ENCODE measurements at regions of chr5 and their contacts with region 1.

Region 1: DNA sequence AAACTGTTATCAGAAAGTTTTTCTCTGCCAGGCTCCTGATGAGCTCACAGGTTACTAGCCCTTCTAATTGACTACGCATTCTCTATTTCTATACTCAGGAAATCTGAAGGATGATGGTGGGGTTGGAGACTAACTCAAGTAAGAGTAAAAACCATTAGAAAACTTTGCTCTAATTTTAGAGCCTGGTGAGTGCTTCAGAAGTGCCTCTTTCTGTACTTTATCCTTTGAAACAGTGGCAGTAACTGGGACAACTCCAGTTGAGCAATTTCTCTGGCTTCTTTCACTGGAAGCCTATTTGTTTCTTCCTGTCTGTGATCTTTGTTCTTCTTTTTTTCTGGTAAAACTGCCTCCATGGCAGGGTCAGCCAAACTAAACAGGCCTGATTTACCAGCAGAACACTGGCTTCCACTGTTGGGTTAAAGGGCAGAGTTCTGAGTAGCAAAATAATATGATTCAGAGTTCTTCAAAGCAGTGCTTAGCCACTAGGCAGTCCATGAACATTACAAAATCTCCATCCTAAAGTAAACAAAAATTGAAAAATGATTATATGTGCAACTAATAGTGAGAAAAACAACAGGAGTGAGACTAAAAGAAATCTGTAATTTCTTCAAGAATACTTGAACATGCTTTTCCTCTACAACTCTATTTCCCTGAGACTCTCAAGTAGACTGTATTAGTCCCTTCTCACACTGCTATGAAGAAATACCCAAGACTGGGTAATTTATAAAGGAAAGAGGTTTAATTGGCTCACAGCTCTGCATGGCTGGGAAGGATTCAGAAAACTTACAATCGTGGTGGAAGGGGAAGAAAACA is 79.8 kb downstream of the MROH2B start:
- DNase-seq: peak; percentile 94
- ATAC-seq: peak; percentile 98
- H3K4me3 ChIP-seq: peak overlapping the region in 2 of 3 experiments; percentile 9 to 24; a peak in 1 of 6 replicates
- H3K27ac ChIP-seq: peak overlapping the region; percentile 91
- H3K4me1 ChIP-seq: peaks cover 51% of the 10 kb centered on the region
- H3K27me3 ChIP-seq: no peaks in the 10 kb centered on the region
- CTCF ChIP-seq: no peak
- EP300 ChIP-seq: peak in 1 of 2 experiments; percentile 95; a peak in 2 of 4 replicates
- POLR2A ChIP-seq: no peak
- RAD21 ChIP-seq: no peak

Region 2: GRCh38 chr5:41009232-41009631 is 17.9 kb after region 1 on chr5:
- CTCF ChIA-PET with region 1: no interaction called
- POLR2A ChIA-PET with region 1: no interaction called
- in situ Hi-C with region 1: no loop called
- intact Hi-C with region 1: no loop called
- DNase-seq: peak; percentile 13
- ATAC-seq: no peak
- H3K4me3 ChIP-seq: no peak overlapping the region
- H3K27ac ChIP-seq: no peak overlapping the region
- H3K4me1 ChIP-seq: no peaks in the 10 kb centered on the region
- H3K27me3 ChIP-seq: no peaks in the 10 kb centered on the region; a peak in 1 of 5 replicates
- CTCF ChIP-seq: no peak
- EP300 ChIP-seq: no peak
- POLR2A ChIP-seq: no peak
- RAD21 ChIP-seq: no peak

Region 3: DNA sequence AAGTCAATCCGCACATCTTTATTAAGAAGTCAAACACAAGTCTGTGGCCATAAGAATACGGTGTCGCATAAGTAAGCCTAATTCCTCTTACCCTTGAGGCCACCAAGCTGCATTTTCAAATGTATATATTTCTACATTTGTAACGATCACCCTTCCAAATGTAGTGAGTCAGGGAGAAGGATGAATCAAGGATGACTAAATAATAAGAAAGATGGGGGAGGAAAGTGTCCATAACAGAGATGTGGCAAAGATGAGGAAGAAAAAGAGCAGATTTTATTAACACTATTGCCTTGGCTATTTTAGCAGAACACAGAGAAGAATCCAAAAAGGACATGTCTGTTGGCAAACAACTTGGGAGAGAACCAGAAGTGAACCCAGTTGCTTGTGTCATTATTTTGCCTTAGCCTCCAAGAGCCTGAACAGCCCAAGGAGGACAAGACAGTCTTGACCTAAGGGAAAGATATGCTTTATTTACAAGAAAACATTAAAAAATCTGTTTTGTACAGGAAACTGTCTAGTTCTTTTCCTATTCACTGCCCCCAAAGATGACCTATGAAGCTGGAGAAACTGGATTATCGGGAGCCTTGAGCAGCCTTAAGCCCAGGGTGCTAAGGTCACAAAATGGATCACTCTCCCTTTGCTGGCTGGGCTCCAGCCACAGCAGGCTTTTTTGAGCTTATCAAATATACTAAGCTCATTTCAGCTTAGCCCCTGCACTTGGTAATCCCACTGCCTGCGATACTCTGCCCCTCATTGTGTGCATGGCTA is 417.5 kb after region 1 on chr5:
- CTCF ChIA-PET with region 1: no interaction called
- POLR2A ChIA-PET with region 1: no interaction called
- in situ Hi-C with region 1: no loop called
- intact Hi-C with region 1: loop called (anchors 10 kb)
- DNase-seq: no peak
- ATAC-seq: no peak
- H3K4me3 ChIP-seq: no peak overlapping the region
- H3K27ac ChIP-seq: no peak overlapping the region
- H3K4me1 ChIP-seq: peaks cover 44% of the 10 kb centered on the region
- H3K27me3 ChIP-seq: no peaks in the 10 kb centered on the region
- CTCF ChIP-seq: no peak
- EP300 ChIP-seq: no peak
- POLR2A ChIP-seq: no peak
- RAD21 ChIP-seq: no peak